ENCODE measurements at regions of chr13 and their contacts with region 1.

Region 1: DNA sequence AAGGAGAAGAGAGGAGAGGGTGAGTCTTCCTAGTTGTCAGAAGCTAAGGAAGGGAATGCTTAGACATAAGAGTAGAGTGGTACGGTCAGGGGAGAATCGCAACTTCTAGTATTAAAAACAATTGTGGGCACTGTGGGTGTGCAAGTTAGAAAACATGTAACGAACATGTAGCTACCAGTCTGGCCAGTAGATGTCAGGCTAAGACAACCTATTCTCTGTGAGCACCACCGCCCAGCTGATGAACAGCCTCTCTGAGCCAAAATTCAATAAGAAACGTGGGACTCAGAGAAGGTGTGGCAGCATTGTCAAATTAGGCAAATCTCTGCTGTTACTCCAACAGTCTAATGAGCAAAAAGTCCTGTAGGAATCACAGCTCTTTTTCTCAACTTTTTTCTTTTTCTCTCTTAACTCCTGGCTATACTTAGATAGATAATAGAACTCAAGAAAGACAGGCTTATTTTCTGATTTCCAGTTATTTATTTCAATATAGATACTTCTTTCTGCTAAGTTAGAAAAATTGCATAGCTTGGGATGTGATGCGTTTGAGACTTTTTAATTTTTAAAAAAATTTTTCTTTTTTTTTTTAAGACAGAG is 186.2 kb downstream of the USP12 start:
- DNase-seq: peak in 1 of 3 donors; percentile 94
- ATAC-seq: peak; percentile 70
- H3K4me3 ChIP-seq: no peak overlapping the region
- H3K4me1 ChIP-seq: peaks cover 33% of the 10 kb centered on the region
- CTCF ChIP-seq: peak; percentile 41

Region 2: GRCh38 chr13:26813321-26813979 is 171.9 kb before region 1 on chr13:
- intact Hi-C with region 1: no loop called
- DNase-seq: no peak
- ATAC-seq: no peak
- H3K4me3 ChIP-seq: no peak overlapping the region
- H3K4me1 ChIP-seq: no peaks in the 10 kb centered on the region
- CTCF ChIP-seq: no peak

Region 3: DNA sequence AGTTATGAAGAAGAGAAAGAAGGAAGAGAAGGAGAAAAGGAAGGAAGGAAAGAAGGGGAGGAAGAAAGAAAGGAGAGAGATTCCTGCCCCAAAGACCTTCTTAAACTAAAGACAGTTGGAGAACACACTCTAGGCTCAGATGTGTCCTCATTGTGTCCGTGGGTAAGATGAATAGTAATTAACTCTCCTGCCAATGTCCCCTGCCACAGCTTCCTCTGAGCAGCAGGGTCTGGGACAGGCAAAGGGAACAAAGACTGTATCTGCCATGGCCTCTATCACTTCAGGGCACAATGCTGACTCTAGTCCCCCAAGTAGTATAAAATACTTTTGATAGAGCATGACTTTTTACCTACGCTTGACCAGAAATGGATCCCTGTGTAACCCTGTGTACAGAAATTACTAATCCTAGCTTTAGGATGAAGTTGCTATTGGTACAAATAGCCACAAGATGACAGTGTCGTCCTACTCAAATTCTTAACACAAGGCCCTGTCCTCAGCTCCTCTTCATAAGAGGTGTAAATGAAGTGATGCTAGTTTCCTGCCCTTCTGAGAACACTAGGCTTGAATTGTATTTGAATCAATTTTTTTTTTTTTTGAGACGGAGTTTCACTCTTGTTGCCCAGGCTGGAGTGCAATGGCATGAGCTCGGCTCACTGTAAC is 38.6 kb before region 1 on chr13:
- intact Hi-C with region 1: loop called in 1 of 2 experiments (anchors 2 kb)
- DNase-seq: no peak
- ATAC-seq: peak; percentile 37
- H3K4me3 ChIP-seq: no peak overlapping the region
- H3K4me1 ChIP-seq: peaks cover 22% of the 10 kb centered on the region
- CTCF ChIP-seq: peak; percentile 64

Region 4: DNA sequence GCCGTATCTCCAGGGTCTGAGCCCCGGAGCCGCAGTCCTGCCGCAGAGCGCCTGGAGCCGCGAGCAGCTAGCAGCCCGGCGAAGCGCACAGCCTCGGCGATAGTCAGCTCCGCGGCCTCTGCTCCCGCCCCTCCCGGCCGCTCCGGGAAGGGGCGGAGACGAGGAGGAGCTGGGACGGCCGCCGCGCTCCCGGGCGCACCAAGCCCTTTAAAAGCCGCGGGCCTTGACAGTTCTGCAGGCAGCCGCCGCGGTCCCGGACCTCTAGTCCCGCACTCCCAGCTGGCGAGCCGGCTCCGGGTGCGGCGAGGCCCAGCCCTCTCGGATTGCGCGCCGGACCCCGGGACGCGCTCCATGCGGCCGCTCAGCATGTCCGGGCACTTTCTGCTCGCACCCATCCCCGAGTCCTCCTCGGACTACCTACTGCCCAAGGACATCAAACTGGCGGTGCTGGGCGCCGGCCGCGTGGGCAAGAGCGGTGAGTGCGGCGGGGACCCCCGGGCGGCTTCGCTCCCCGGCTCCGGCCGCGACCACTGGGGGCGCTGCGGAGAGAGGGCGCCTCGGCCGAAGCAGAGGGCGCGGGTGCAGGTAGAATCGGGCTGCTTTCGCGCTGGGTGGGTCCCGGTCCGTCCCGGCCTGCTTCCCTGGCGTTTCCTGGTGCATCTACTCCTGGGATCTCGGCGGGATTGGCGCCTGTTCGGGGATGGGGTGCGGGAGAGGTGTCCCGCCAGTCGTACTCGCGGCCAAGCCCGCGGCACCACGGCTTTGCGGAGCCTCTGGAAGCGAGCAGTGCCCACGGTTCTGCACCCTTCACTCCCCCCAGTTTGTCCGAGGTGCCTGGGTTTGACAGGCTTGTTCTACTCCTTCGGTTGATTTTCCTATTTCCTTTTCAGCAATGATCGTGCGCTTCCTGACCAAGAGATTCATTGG is 285.5 kb after region 1 on chr13 and contains the start of gene RASL11A:
- intact Hi-C with region 1: loop called (anchors 10 kb)
- DNase-seq: peak; percentile 85 to 93 (median 92)
- ATAC-seq: peak; percentile 96
- H3K4me3 ChIP-seq: peak within 1 kb of the TSS; percentile 65
- H3K4me1 ChIP-seq: peaks cover 15% of the 10 kb centered on the region
- CTCF ChIP-seq: peak; percentile 94
- total RNA-seq, gene RASL11A: 27.0 to 75.0 (median 34.9) TPM

Measured in mucosa of descending colon (tissue), 3 donors.